GM12878 (cell line): ENCODE measurements at regions of chr10 and their contacts with region 1.

Region 1: DNA sequence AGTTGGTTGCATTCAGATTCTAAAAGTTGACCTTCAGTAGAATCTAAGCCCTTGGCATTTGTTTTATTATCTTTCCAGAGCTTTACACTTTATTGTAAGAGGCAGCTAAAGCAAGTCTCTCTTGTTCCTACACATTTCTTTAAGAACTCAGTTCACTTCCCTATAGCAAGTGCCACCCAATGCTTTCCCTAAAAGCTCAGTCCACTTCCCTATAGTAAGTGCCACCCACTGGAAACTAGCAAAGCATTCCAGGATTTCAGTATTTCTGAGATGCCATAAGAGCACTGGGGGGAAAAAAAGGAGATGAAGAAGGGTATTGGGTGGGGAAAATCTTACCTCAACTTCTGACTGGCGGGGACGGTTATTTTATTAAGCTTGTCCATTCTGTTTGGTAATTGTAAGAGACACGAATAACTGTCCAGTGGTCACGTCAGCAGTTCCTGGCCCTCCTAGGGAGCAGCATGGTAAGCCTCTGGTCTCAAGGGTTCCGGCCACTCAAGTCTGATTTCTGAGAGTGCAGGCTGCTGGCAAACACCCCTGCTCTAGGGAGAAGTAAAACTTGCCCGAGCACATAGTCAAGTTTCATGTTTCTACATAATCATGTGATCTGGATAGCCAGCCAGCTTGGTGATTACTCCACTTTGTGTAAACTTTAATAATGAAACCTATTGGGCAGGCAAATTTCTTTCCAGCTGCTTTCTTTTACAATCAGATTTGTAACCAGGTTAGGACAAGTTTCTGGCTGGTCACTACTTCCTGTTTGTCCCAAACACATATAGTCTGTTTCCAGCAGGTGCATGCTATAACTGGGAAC is at the start of gene BLNK:
- DNase-seq: peak; percentile 92
- ATAC-seq: peak; percentile 79
- H3K4me3 ChIP-seq: peak within 1 kb of the TSS; percentile 89
- H3K27ac ChIP-seq: peak within 1 kb of the TSS; percentile 98
- H3K4me1 ChIP-seq: peaks cover 32% of the 10 kb centered on the region
- H3K27me3 ChIP-seq: no peaks in the 10 kb centered on the region
- CTCF ChIP-seq: no peak
- EP300 ChIP-seq: peak in 1 of 2 experiments; percentile 74; a peak in 2 of 4 replicates
- POLR2A ChIP-seq: peak; percentile 93
- RAD21 ChIP-seq: no peak
- polyA plus RNA-seq, gene BLNK: 165 to 201 TPM

Region 2: GRCh38 chr10:95783741-95784140 is 487.5 kb before region 1 on chr10:
- CTCF ChIA-PET with region 1: interaction called, 3 read pairs
- POLR2A ChIA-PET with region 1: no interaction called
- RAD21 ChIA-PET with region 1: no interaction called
- SMC1A ChIA-PET with region 1: interaction called, 3 read pairs
- in situ Hi-C with region 1: no loop called
- intact Hi-C with region 1: loop called (anchors 10 kb)
- DNase-seq: peak; percentile 94
- ATAC-seq: peak; percentile 50
- H3K4me3 ChIP-seq: no peak overlapping the region
- H3K27ac ChIP-seq: peak overlapping the region; percentile 99
- H3K4me1 ChIP-seq: peaks cover 79% of the 10 kb centered on the region
- H3K27me3 ChIP-seq: no peaks in the 10 kb centered on the region
- CTCF ChIP-seq: no peak
- EP300 ChIP-seq: peak; percentile 93 to 99
- POLR2A ChIP-seq: no peak
- RAD21 ChIP-seq: peak; percentile 8; the same call in 1 of the 2 replicates

Region 3: GRCh38 chr10:96236090-96236478 is 35.1 kb before region 1 on chr10:
- CTCF ChIA-PET with region 1: interaction called, 219 read pairs
- POLR2A ChIA-PET with region 1: interaction called, 21 read pairs
- RAD21 ChIA-PET with region 1: interaction called, 159 read pairs
- SMC1A ChIA-PET with region 1: interaction called, 123 read pairs
- in situ Hi-C with region 1: no loop called
- intact Hi-C with region 1: loop called (anchors 2 kb)
- DNase-seq: no peak
- ATAC-seq: peak; percentile 66
- H3K4me3 ChIP-seq: no peak overlapping the region; the same call in 1 of the 2 replicates
- H3K27ac ChIP-seq: peak overlapping the region; percentile 45; the same call in 1 of the 2 replicates
- H3K4me1 ChIP-seq: peaks cover 37% of the 10 kb centered on the region
- H3K27me3 ChIP-seq: no peaks in the 10 kb centered on the region
- CTCF ChIP-seq: no peak
- EP300 ChIP-seq: no peak
- POLR2A ChIP-seq: no peak
- RAD21 ChIP-seq: no peak

Region 4: DNA sequence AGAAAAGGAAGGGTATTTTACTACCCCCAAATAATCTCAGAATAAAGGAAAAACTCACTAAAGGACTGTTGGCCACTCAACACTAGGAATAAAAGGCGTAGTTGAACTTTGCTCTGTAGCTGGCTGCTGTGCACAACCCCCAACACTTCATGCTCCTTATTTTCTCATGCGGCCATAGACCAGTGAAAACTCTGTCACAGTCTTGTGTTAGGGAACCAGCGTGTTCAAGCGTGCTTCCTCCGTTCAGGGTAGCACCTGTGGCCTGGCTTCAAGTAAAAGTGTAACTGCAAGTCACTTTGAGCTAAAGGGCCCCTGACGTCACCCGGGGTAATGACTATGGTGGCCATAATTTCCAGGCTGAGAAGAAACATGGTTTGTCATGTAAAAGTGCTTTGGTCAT is 26.9 kb before region 1 on chr10:
- CTCF ChIA-PET with region 1: interaction called, 219 read pairs
- POLR2A ChIA-PET with region 1: interaction called, 35 read pairs
- RAD21 ChIA-PET with region 1: interaction called, 69 read pairs
- SMC1A ChIA-PET with region 1: interaction called, 137 read pairs
- in situ Hi-C with region 1: no loop called
- intact Hi-C with region 1: loop called (anchors 1 kb)
- DNase-seq: peak; percentile 89
- ATAC-seq: peak; percentile 98
- H3K4me3 ChIP-seq: 0 out of 2 replicates have a peak overlapping the region, but pooled peaks have one; percentile 18
- H3K27ac ChIP-seq: peak overlapping the region; percentile 67
- H3K4me1 ChIP-seq: peaks cover 24% of the 10 kb centered on the region
- H3K27me3 ChIP-seq: no peaks in the 10 kb centered on the region
- CTCF ChIP-seq: no peak
- EP300 ChIP-seq: peak; percentile 41 to 56; a peak in 3 of 4 replicates
- POLR2A ChIP-seq: peak; percentile 46
- RAD21 ChIP-seq: peak; percentile 3; the same call in 1 of the 2 replicates

Region 5: GRCh38 chr10:96257944-96258343 is 13.3 kb before region 1 on chr10:
- CTCF ChIA-PET with region 1: interaction called, 7 read pairs
- POLR2A ChIA-PET with region 1: interaction called, 28 read pairs
- RAD21 ChIA-PET with region 1: interaction called, 46 read pairs
- SMC1A ChIA-PET with region 1: interaction called, 137 read pairs
- in situ Hi-C with region 1: no loop called
- intact Hi-C with region 1: no loop called
- DNase-seq: no peak
- ATAC-seq: peak; percentile 19; the same call in 2 of the 3 replicates
- H3K4me3 ChIP-seq: peak overlapping the region; percentile 1; the same call in 1 of the 2 replicates
- H3K27ac ChIP-seq: peak overlapping the region; percentile 38
- H3K4me1 ChIP-seq: peaks cover 34% of the 10 kb centered on the region
- H3K27me3 ChIP-seq: no peaks in the 10 kb centered on the region
- CTCF ChIP-seq: no peak
- EP300 ChIP-seq: no peak
- POLR2A ChIP-seq: no peak
- RAD21 ChIP-seq: no peak

Region 6: DNA sequence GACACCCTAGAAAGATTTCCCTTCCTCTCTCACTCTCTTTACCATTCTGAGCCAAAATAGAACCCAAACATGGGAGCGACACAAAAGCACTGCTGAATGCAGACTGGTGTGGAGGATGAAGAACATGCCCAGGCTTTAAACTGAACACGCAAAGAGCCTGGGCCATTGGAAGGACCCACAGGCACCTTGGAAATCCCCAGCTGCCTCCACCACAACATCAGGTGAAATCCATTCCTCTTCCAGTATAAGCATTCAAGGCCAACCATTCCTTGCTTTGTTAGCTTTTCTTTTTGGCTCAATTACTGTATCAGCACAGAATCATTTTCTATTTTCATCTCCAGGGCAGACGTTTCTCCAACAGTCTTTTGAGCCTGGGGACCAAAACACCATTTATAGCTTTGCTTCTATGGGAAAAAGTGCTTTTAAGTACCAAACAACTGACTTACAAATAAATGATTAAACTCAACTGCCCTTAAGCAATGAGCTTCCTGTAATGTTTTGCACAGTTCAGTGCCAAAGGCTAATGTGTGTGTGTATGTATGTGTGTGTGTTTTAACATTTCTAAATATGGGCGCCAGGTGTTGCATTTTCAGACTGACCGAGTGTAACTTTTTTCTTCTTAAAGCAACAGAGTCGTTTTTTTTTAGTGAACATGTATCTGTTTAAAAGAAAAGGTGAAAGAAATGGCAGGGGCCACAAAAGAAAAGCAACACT is 16.3 kb after region 1 on chr10:
- CTCF ChIA-PET with region 1: interaction called, 213 read pairs
- POLR2A ChIA-PET with region 1: interaction called, 174 read pairs
- RAD21 ChIA-PET with region 1: interaction called, 362 read pairs
- SMC1A ChIA-PET with region 1: interaction called, 305 read pairs
- in situ Hi-C with region 1: no loop called
- intact Hi-C with region 1: loop called (anchors 1 kb)
- DNase-seq: peak; percentile 93
- ATAC-seq: peak; percentile 81
- H3K4me3 ChIP-seq: peak overlapping the region; percentile 70
- H3K27ac ChIP-seq: peak overlapping the region; percentile 92
- H3K4me1 ChIP-seq: peaks cover 50% of the 10 kb centered on the region
- H3K27me3 ChIP-seq: no peaks in the 10 kb centered on the region
- CTCF ChIP-seq: no peak
- EP300 ChIP-seq: peak; percentile 78 to 96; a peak in 3 of 4 replicates
- POLR2A ChIP-seq: no peak; the same call in 1 of the 2 replicates
- RAD21 ChIP-seq: 0 out of 2 replicates have a peak, but pooled peaks have one; percentile 29

Region 7: DNA sequence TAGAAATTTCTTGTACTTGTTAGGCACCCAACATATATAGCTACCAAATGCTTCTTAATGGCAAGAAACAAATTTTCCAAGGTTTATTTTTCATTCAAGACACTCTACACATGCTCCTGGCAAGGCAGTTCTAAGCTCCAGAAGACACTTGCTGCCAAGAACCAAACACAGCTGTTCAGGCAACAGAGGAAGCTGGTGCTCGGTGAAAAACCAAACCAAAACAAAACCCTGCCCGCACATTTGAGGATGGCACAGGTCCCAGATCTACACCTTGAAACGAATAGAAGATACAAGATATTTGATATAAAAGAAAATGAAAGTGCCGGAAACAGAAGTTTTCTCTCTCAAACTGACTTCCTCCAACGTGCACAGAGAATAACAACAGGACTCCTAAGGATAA is 28.2 kb after region 1 on chr10:
- CTCF ChIA-PET with region 1: interaction called, 213 read pairs
- POLR2A ChIA-PET with region 1: no interaction called
- RAD21 ChIA-PET with region 1: interaction called, 362 read pairs
- SMC1A ChIA-PET with region 1: interaction called, 229 read pairs
- in situ Hi-C with region 1: no loop called
- intact Hi-C with region 1: no loop called
- DNase-seq: no peak
- ATAC-seq: peak; percentile 45; the same call in 2 of the 3 replicates
- H3K4me3 ChIP-seq: 0 out of 2 replicates have a peak overlapping the region, but pooled peaks have one; percentile 19
- H3K27ac ChIP-seq: no peak overlapping the region
- H3K4me1 ChIP-seq: peaks cover 6% of the 10 kb centered on the region; the same call in 1 of the 2 replicates
- H3K27me3 ChIP-seq: no peaks in the 10 kb centered on the region
- CTCF ChIP-seq: no peak
- EP300 ChIP-seq: no peak
- POLR2A ChIP-seq: no peak
- RAD21 ChIP-seq: no peak